MCF 10A (cell line): ENCODE measurements at regions of chr2 and their contacts with region 1.

Region 1: GRCh38 chr2:118371515-118371914 is 283.2 kb downstream of the INSIG2 start:
- DNase-seq: peak; percentile 62
- H3K4me3 Mint-ChIP-seq: no peak overlapping the region
- H3K27ac Mint-ChIP-seq: no peak overlapping the region
- H3K4me1 Mint-ChIP-seq: peaks cover 7% of the 10 kb centered on the region
- H3K27me3 Mint-ChIP-seq: no peaks in the 10 kb centered on the region
- CTCF ChIP-seq: peak; percentile 90

Region 2: GRCh38 chr2:118046634-118047210 is 324.8 kb before region 1 on chr2:
- CTCF ChIA-PET with region 1: interaction called, 3 read pairs
- POLR2A ChIA-PET with region 1: no interaction called
- intact Hi-C with region 1: loop called (anchors 5 kb)
- DNase-seq: peak; percentile 44
- H3K4me3 Mint-ChIP-seq: no peak overlapping the region
- H3K27ac Mint-ChIP-seq: no peak overlapping the region
- H3K4me1 Mint-ChIP-seq: peaks cover 5% of the 10 kb centered on the region
- H3K27me3 Mint-ChIP-seq: peaks cover 32% of the 10 kb centered on the region
- CTCF ChIP-seq: peak; percentile 54

Region 3: GRCh38 chr2:118431165-118431517 is 59.6 kb after region 1 on chr2:
- CTCF ChIA-PET with region 1: interaction called, 8 read pairs
- POLR2A ChIA-PET with region 1: no interaction called
- intact Hi-C with region 1: loop called (anchors 1 kb)
- DNase-seq: peak; percentile 66
- H3K4me3 Mint-ChIP-seq: peak overlapping the region; percentile 37
- H3K27ac Mint-ChIP-seq: peak overlapping the region; percentile 85
- H3K4me1 Mint-ChIP-seq: peaks cover 26% of the 10 kb centered on the region
- H3K27me3 Mint-ChIP-seq: no peaks in the 10 kb centered on the region
- CTCF ChIP-seq: peak; percentile 35

Region 4: DNA sequence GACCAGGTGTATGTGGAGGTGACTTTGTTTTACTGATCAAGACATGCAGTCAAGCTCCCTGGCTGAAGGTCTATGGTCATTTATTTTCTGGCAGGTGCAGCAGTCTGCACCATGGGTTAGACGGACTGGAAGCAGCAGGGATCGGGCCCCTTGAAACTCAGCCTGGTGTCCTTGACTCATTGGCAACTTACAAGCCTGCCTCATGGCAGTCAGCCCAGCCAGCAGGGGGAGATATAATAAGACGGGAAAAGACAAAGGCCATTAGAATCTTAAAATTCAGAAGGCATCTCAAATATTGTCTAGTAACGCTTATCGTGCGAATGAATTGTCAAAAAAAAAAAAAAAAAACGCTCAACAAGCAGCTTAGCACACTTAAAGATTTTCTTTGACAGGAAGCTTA is 167.8 kb after region 1 on chr2:
- CTCF ChIA-PET with region 1: interaction called, 6 read pairs
- POLR2A ChIA-PET with region 1: no interaction called
- intact Hi-C with region 1: loop called (anchors 5 kb)
- DNase-seq: peak; percentile 36
- H3K4me3 Mint-ChIP-seq: no peak overlapping the region
- H3K27ac Mint-ChIP-seq: no peak overlapping the region
- H3K4me1 Mint-ChIP-seq: no peaks in the 10 kb centered on the region
- H3K27me3 Mint-ChIP-seq: no peaks in the 10 kb centered on the region
- CTCF ChIP-seq: peak; percentile 25

Region 5: GRCh38 chr2:118855451-118856279 is 484.1 kb after region 1 on chr2:
- CTCF ChIA-PET with region 1: interaction called, 122 read pairs
- POLR2A ChIA-PET with region 1: no interaction called
- intact Hi-C with region 1: loop called (anchors 1 kb)
- DNase-seq: peak; percentile 70
- H3K4me3 Mint-ChIP-seq: no peak overlapping the region
- H3K27ac Mint-ChIP-seq: no peak overlapping the region
- H3K4me1 Mint-ChIP-seq: no peaks in the 10 kb centered on the region
- H3K27me3 Mint-ChIP-seq: peaks cover 12% of the 10 kb centered on the region
- CTCF ChIP-seq: peak; percentile 99